Vagina (tissue), 2 donors: ENCODE measurements at regions of chr16 and their contacts with region 1.

Region 1: GRCh38 chr16:48156790-48157209 is 1.0 kb upstream of the ABCC12 start:
- DNase-seq: no peak
- H3K4me3 ChIP-seq: no peak overlapping the region
- H3K27ac ChIP-seq: no peak overlapping the region
- H3K4me1 ChIP-seq: no peaks in the 10 kb centered on the region
- H3K27me3 ChIP-seq: no peaks in the 10 kb centered on the region
- CTCF ChIP-seq: peak; percentile 56 to 92 (median 72)
- POLR2A ChIP-seq: no peak

Region 2: DNA sequence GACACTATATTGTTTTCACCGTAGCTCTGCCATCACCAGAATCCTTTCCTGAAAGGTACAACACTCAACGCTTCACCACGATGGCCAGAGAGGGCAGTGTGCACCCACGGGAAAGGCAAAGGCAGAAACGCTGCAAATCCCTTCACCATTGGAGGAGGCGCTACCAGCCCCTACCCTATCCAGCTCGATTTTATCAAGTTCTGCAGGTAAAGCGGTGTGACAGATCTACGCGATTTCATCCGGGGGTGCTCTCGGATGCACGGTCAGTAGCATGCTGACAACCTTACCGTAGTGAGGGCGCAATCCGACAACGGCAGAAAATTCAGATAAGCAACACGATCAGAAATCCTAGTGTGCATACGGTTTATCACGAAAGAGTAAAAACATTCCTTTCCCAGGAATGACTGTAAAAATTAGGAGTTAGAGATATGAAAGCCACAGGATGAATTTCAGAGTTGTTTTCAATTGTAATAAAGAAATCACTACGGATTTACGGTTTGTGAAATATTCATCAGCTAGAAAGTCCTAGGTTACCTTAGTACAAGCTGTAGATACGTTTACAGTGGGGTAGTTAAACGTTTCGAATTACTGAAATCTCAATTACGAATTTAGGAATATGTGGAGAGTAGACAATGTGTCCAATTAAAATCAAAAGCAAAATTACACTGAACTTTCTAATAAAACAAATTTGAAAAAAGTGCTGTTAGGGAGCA is 1014.9 kb before region 1 on chr16:
- intact Hi-C with region 1: loop called (anchors 5 kb)
- DNase-seq: no peak
- H3K4me3 ChIP-seq: peak overlapping the region; percentile 49 to 52
- H3K27ac ChIP-seq: no peak overlapping the region
- H3K4me1 ChIP-seq: peaks cover 14% of the 10 kb centered on the region
- H3K27me3 ChIP-seq: no peaks in the 10 kb centered on the region
- CTCF ChIP-seq: peak; percentile 55 to 81 (median 77)
- POLR2A ChIP-seq: no peak

Region 3: GRCh38 chr16:48452977-48453760 is 296.4 kb after region 1 on chr16:
- intact Hi-C with region 1: no loop called
- DNase-seq: no peak
- H3K4me3 ChIP-seq: no peak overlapping the region
- H3K27ac ChIP-seq: no peak overlapping the region
- H3K4me1 ChIP-seq: peaks cover 4% of the 10 kb centered on the region
- H3K27me3 ChIP-seq: no peaks in the 10 kb centered on the region
- CTCF ChIP-seq: no peak
- POLR2A ChIP-seq: no peak